ENCODE measurements at regions of chr20 and their contacts with region 1.

Region 1: DNA sequence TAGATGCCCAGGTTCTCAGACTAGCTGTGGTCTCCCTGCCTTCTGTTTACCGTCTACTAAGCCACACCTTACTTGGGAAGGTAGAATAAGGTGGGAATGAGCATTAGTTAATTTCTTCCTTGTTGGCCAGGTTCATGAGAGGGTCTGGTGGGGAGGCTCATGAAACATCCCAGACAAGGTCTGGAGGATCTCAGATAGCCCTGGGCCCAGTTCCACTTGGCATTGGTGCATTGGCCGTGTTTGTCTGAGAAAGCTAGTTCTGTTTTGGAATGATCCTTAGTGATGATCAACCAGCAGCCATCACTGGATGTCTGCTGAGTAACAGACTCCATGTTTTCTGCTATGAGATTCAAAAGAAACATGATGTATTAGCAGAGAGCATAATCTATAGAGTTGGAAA is 155.1 kb downstream of the SLC24A3 start:
- DNase-seq: no peak
- H3K4me3 ChIP-seq: no peak overlapping the region
- H3K27ac ChIP-seq: no peak overlapping the region
- H3K27me3 ChIP-seq: no peaks in the 10 kb centered on the region
- CTCF ChIP-seq: no peak

Region 2: GRCh38 chr20:18431206-18431605 is 936.4 kb before region 1 on chr20:
- CTCF ChIA-PET with region 1: no interaction called
- POLR2A ChIA-PET with region 1: interaction called, 14 read pairs
- DNase-seq: no peak
- H3K4me3 ChIP-seq: no peak overlapping the region
- H3K27ac ChIP-seq: no peak overlapping the region
- H3K27me3 ChIP-seq: no peaks in the 10 kb centered on the region
- CTCF ChIP-seq: no peak

Region 3: GRCh38 chr20:19181552-19181951 is 186.0 kb before region 1 on chr20:
- CTCF ChIA-PET with region 1: no interaction called
- POLR2A ChIA-PET with region 1: no interaction called
- DNase-seq: no peak
- H3K4me3 ChIP-seq: no peak overlapping the region
- H3K27ac ChIP-seq: no peak overlapping the region
- H3K27me3 ChIP-seq: no peaks in the 10 kb centered on the region
- CTCF ChIP-seq: no peak

Region 4: DNA sequence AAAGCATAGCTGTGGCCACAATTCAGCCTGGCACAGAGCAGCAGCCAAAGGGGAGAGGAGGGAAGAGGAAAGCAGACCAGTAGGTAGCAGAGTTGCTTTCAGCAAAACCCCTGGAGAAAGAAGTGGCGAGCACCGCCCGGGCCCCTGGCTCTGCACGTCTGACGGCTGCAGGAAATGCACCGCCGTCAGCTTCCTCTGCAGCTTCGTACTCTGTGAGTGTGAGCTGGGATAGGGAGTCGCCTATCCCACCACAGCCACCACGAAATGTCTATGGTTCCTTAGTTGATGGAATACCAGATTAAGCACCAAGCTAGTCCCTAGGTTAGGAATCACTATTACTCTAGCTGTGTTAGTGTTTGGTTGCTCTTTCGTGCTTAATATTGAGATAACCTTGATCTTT is 569.6 kb after region 1 on chr20:
- CTCF ChIA-PET with region 1: no interaction called
- POLR2A ChIA-PET with region 1: no interaction called
- DNase-seq: no peak
- H3K4me3 ChIP-seq: no peak overlapping the region
- H3K27ac ChIP-seq: no peak overlapping the region
- H3K27me3 ChIP-seq: no peaks in the 10 kb centered on the region
- CTCF ChIP-seq: no peak

Measured in AG04450 (cell line).